ENCODE measurements at regions of chr3 and their contacts with region 1.

Region 1: DNA sequence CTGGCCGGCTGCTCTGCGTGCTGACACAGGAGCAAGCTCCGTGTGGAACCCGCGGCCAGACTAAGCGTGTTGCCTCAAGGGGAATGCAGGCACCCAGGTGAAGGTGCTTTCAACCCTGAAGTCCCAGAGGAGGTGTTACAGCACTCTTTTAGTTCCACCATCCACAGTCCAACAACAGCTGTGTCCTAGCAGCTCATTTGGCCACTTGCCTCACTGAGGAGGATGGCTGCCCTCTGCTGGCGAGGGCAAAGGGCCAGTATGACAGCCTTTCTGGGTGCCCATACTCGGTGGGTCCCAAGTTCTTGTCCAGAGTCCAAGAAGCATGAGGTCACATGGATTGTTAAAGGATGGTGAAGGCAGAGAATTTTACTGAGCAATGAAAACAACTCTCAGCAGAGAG is 87.8 kb downstream of the C3orf85 start:
- DNase-seq: peak; percentile 33
- ATAC-seq: no peak
- H3K4me3 Mint-ChIP-seq: no peak overlapping the region
- H3K27ac Mint-ChIP-seq: no peak overlapping the region
- H3K4me1 Mint-ChIP-seq: no peaks in the 10 kb centered on the region
- H3K27me3 Mint-ChIP-seq: peaks cover 2% of the 10 kb centered on the region

Region 2: DNA sequence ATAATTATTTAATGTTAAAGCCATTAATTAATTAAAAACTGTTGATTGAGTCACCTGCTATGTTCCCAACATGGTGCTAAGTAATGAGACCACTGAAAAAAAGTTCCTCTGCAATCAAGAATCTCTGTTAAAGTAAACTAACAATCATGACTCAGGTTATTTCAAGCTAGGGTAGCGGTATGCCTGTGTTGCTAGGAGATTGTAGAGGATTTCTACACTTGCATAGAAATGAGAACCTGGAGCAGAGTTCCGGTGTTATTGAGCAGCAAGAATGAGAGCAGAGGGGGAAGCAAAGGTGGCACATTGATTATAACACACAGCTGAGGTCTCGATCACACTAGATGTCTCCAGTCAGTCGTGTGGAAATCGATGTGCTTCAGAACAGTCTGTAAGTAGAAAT is 46.4 kb before region 1 on chr3:
- CTCF ChIA-PET with region 1: no interaction called
- POLR2A ChIA-PET with region 1: no interaction called
- intact Hi-C with region 1: loop called in 1 of 2 experiments (anchors 5 kb)
- DNase-seq: no peak
- ATAC-seq: no peak
- H3K4me3 Mint-ChIP-seq: no peak overlapping the region
- H3K27ac Mint-ChIP-seq: no peak overlapping the region
- H3K4me1 Mint-ChIP-seq: no peaks in the 10 kb centered on the region
- H3K27me3 Mint-ChIP-seq: peaks cover 3% of the 10 kb centered on the region

Region 3: GRCh38 chr3:109241459-109242186 is 17.3 kb after region 1 on chr3:
- CTCF ChIA-PET with region 1: no interaction called
- POLR2A ChIA-PET with region 1: no interaction called
- intact Hi-C with region 1: no loop called
- DNase-seq: no peak
- ATAC-seq: no peak
- H3K4me3 Mint-ChIP-seq: no peak overlapping the region
- H3K27ac Mint-ChIP-seq: no peak overlapping the region
- H3K4me1 Mint-ChIP-seq: no peaks in the 10 kb centered on the region
- H3K27me3 Mint-ChIP-seq: no peaks in the 10 kb centered on the region